ENCODE measurements at regions of chr15 and their contacts with region 1.

Region 1: DNA sequence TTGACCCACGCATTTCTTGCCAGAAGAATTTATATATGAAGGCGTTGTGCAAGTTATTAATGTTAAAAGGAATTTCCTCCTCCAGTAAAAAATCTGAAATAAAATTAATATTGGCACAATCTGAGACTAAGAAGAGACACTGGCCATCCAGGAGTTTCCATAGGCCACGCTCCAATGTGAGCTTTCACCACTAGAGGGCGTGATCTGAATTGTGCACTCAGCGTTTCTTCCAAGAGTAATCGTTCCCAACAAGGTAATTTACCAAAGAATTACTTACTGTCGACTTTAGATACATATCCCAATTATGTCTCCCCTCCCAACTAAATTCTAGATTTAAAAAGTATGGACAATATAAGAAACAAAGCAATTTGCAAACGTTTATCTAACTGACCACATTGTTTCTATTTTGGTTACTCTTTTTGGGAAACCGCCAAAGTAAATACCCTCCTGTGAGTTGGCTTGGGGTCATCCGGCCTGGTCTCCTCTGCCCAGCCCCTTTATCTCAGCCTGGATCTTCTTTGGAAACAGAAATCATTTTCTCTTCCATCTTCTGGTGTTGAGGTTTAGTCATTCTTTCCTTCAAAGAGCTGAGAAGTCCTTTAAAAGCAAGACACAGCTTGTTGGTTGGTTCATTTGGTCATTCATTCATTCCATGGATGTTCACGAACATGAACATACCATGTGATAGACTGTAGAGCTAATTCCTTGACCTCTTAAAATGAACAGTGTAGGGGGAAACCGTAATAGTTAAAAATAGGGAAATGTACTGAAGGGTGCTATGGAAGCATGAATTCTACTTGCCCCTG is 26.2 kb downstream of the POLR2M start:
- DNase-seq: peak; percentile 42
- H3K4me3 Mint-ChIP-seq: no peak overlapping the region
- H3K27ac Mint-ChIP-seq: no peak overlapping the region
- H3K4me1 Mint-ChIP-seq: no peaks in the 10 kb centered on the region
- H3K27me3 Mint-ChIP-seq: no peaks in the 10 kb centered on the region

Region 2: DNA sequence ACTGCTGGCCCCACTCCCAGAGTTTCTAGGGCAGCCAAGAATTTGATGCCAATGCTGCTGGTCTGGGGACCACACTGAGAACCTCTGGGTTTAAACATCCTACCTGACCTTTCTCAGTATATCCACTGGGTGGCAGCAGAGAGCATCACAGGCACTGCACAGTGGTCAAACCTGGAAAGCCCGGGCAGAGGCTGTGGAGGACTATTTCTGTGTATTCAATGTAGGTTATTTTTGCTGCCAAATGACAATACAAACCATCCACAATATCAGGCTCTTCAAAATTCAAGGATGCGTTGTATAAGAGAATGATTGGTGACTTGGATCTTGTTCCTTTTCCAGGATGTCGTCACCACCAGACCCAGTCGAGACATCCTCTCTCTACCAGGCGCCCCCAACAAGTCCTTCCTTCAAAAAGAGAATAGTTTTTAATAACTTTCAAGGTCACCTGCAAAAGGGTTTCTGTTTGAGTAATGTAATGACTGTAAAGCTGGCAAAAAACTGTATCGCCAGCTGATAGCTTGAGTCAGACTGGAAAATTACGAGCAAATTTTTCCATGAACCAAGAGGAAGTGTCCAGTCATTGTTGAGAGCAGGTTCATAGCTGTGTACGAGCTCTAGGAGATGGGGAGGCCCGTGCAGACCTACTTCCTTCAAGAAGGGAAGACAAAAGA is 171.6 kb before region 1 on chr15:
- CTCF ChIA-PET with region 1: interaction called, 12 read pairs
- POLR2A ChIA-PET with region 1: no interaction called
- DNase-seq: peak; percentile 67
- H3K4me3 Mint-ChIP-seq: no peak overlapping the region
- H3K27ac Mint-ChIP-seq: no peak overlapping the region
- H3K4me1 Mint-ChIP-seq: peaks cover 38% of the 10 kb centered on the region
- H3K27me3 Mint-ChIP-seq: peaks cover 5% of the 10 kb centered on the region

Region 3: GRCh38 chr15:57706405-57707209 is 26.1 kb before region 1 on chr15 and contains the start of gene POLR2M:
- CTCF ChIA-PET with region 1: interaction called, 14 read pairs
- POLR2A ChIA-PET with region 1: interaction called, 3 read pairs
- DNase-seq: peak; percentile 92
- H3K4me3 Mint-ChIP-seq: peak within 1 kb of the TSS; percentile 92
- H3K27ac Mint-ChIP-seq: peak within 1 kb of the TSS; percentile 77
- H3K4me1 Mint-ChIP-seq: peaks cover 73% of the 10 kb centered on the region
- H3K27me3 Mint-ChIP-seq: no peaks in the 10 kb centered on the region
- total RNA-seq, gene POLR2M: 70.6 to 71.0 TPM

Region 4: GRCh38 chr15:57720867-57721266 is 11.9 kb before region 1 on chr15:
- CTCF ChIA-PET with region 1: interaction called, 16 read pairs
- POLR2A ChIA-PET with region 1: no interaction called
- DNase-seq: no peak
- H3K4me3 Mint-ChIP-seq: no peak overlapping the region
- H3K27ac Mint-ChIP-seq: no peak overlapping the region
- H3K4me1 Mint-ChIP-seq: peaks cover 5% of the 10 kb centered on the region
- H3K27me3 Mint-ChIP-seq: no peaks in the 10 kb centered on the region

Region 5: GRCh38 chr15:57743424-57743823 is 10.7 kb after region 1 on chr15:
- CTCF ChIA-PET with region 1: interaction called, 27 read pairs
- POLR2A ChIA-PET with region 1: no interaction called
- DNase-seq: no peak
- H3K4me3 Mint-ChIP-seq: no peak overlapping the region
- H3K27ac Mint-ChIP-seq: no peak overlapping the region
- H3K4me1 Mint-ChIP-seq: no peaks in the 10 kb centered on the region
- H3K27me3 Mint-ChIP-seq: peaks cover 3% of the 10 kb centered on the region